ENCODE measurements at regions of chr10 and their contacts with region 1.

Region 1: DNA sequence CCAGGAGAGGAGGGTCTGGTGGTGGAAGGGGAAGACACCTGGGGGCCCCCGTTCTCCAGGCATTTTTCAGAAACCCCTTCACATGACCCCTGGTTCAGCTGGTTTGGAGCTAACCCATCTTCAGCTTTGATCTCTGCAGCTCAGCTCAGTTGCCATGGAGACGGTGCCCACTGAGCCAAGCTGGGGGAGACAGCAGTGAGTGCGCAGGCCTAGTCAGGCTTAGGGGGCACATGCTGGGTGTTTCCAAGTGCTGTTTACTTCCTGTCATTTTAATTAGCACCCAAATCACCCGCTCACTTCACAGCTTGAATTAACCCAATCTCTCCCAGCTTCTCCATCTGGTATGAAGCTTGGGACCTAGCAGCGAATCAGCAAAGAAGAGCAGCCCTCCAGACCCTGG is 9.0 kb downstream of the SPOCK2 start:
- DNase-seq: peak; percentile 80 to 98 (median 92)
- ATAC-seq: peak; percentile 75 to 81
- H3K4me3 Mint-ChIP-seq: peak overlapping the region; percentile 88 to 96 (median 94)
- H3K27ac Mint-ChIP-seq: peak overlapping the region; percentile 92 to 99 (median 97)
- H3K4me1 Mint-ChIP-seq: peaks cover 57 to 99% (median 95%) of the 10 kb centered on the region in 4 donors
- H3K27me3 Mint-ChIP-seq: peaks cover 0 to 1% (median 0%) of the 10 kb centered on the region in 5 donors

Region 2: DNA sequence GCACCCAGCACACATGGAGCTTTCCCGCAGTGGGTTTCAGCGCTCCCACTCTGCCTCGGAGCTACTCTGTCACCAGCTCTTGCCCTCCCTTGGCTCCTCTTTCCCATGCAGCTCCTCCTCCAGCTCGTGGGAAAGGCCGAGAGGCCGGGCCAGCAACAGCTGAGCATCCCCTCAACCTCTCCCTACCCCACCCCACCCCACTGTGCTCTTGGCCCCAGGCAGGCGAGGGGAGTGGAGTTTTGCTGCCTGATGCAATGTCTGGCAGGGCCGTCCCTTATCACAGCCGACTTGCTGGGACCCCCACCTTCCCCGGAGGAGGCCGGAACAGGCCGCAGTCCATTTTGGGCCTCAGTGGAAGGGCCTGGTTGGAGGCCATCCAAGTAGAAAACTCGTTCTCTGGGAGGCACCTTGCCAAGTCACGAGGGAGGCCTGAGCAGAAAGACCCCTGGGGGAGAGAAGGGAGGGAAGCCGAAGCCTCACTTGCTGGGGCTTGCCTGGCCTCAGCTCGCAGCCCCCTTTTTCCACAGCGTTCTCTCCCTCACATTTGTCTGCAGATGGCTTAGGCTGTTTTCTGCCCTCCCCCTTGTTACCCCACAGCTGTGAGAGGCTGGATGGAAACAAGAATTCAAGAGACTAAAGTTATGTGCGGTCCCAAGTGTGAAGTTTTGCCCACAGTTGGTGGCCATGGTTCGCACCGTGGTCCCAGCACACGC is 79.8 kb before region 1 on chr10:
- POLR2A ChIA-PET with region 1: no interaction called
- DNase-seq: no peak
- ATAC-seq: no peak
- H3K4me3 Mint-ChIP-seq: no peak overlapping the region
- H3K27ac Mint-ChIP-seq: peak overlapping the region in 1 of 10 donors; percentile 69
- H3K4me1 Mint-ChIP-seq: peaks cover 0 to 5% (median 0%) of the 10 kb centered on the region in 4 donors
- H3K27me3 Mint-ChIP-seq: peaks cover 0 to 3% (median 0%) of the 10 kb centered on the region in 5 donors

Region 3: GRCh38 chr10:72061491-72061890 is 17.9 kb before region 1 on chr10:
- POLR2A ChIA-PET with region 1: interaction called, 64 read pairs
- DNase-seq: peak in 2 of 10 donors; percentile 9 to 38
- ATAC-seq: peak; percentile 12 to 22
- H3K4me3 Mint-ChIP-seq: peak overlapping the region in 6 of 10 donors; percentile 23 to 75 (median 39)
- H3K27ac Mint-ChIP-seq: peak overlapping the region; percentile 76 to 98 (median 83)
- H3K4me1 Mint-ChIP-seq: peaks cover 34 to 68% (median 44%) of the 10 kb centered on the region in 4 donors
- H3K27me3 Mint-ChIP-seq: no peaks in the 10 kb centered on the region

Region 4: DNA sequence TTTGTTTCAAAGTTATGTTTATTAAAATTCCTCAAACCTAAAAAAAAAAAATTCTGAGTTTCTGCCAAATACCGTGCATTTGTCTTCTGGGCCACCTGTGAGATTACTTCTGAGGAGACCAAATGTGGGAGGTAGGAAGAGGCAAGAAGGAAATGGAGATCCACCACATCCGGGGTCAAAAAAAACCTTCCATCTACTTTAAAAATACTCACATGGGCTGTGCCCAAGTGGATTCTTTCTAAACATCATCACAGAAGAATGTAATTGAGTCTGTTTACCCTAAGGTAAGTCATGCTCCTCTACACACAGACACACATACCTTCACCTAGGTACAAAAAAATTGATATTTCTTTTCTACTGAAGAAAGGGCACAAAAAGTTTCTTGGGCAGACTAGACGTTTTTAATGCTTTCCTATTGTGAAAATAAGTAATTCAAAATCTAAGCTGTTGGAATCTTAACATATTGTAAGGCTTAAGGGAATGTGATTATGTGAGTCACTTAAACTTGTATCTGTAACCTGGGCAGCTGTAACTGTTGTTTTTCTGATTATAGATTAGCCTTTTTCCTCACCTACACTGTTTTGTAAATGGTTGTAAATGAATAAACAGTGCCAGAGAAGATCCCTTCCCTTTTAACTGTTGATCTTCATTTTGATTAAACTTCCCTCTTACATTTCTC is 28.1 kb after region 1 on chr10:
- POLR2A ChIA-PET with region 1: interaction called, 208 read pairs
- DNase-seq: peak in 6 of 10 donors; percentile 37 to 76 (median 68)
- ATAC-seq: peak; percentile 66 to 90
- H3K4me3 Mint-ChIP-seq: peak overlapping the region; percentile 60 to 87 (median 75)
- H3K27ac Mint-ChIP-seq: peak overlapping the region; percentile 81 to 95 (median 90)
- H3K4me1 Mint-ChIP-seq: peaks cover 51 to 91% (median 88%) of the 10 kb centered on the region in 4 donors
- H3K27me3 Mint-ChIP-seq: no peaks in the 10 kb centered on the region

Region 5: DNA sequence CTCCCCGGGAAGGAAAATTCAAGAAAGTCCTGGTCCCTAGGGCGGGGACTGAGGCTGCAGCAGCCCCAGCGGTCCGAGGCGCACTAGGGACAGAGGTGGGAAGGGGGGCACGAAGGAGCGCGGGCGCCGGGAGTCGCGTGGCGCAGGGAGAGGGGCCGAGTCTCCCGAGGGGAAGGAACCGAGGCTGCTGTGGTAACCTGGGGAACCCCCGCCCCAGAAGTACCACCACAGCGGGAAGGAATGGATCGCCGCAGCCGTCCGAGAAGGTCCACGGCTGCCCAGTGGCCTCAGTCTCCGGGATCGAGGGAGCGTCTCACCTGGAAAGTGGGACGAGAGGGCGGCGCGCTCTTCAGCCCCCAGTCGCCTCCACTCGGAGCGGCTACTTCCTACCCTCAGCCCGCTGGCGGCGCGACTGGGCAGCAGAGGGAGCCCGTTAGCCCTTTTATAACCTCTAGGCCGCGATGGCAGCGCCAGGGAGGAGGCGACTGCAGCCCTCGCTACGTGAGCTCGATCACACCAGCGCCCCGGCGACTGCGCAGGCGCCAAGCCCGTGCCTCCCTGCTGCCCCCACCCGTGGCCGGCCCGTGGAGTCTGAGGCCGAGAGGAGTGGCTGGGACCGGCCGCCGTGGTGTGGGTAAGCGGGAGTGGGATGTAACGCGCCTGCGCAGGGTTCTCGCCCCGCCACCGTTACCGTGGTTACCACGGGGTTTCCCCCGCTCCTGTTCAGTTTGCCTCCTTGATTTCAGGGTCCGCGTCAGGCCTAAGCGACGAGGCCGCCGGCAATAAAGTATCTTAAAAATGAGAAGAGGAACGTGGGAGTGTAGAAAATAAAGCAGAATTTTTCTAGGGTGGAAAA is 1017.3 kb after region 1 on chr10 and contains the start of gene P4HA1:
- POLR2A ChIA-PET with region 1: interaction called, 11 read pairs
- DNase-seq: peak; percentile 91 to 99 (median 96)
- ATAC-seq: peak; percentile 81 to 85
- H3K4me3 Mint-ChIP-seq: peak within 1 kb of the TSS; percentile 87 to 97 (median 92)
- H3K27ac Mint-ChIP-seq: peak within 1 kb of the TSS; percentile 78 to 97 (median 96)
- H3K4me1 Mint-ChIP-seq: peaks cover 15 to 34% (median 30%) of the 10 kb centered on the region in 4 donors
- H3K27me3 Mint-ChIP-seq: no peaks in the 10 kb centered on the region
- polyA plus RNA-seq, gene P4HA1: 14.2 to 17.6 (median 14.4) TPM

Measured in naive thymus-derived CD8-positive, alpha-beta T cell (primary cell).